Right cardiac atrium (tissue), 5 donors: ENCODE measurements at regions of chr2 and their contacts with region 1.

Region 1: GRCh38 chr2:197804049-197804757 is at the start of gene PLCL1:
- DNase-seq: peak; percentile 94 to 97 (median 97)
- ATAC-seq: peak; percentile 97 to 98
- H3K4me3 ChIP-seq: peak within 1 kb of the TSS; percentile 69
- H3K27ac ChIP-seq: peak within 1 kb of the TSS; percentile 70
- H3K4me1 ChIP-seq: no peaks in the 10 kb centered on the region
- H3K27me3 ChIP-seq: no peaks in the 10 kb centered on the region
- total RNA-seq, gene PLCL1: 37.8 to 70.1 (median 52.7) TPM

Region 2: DNA sequence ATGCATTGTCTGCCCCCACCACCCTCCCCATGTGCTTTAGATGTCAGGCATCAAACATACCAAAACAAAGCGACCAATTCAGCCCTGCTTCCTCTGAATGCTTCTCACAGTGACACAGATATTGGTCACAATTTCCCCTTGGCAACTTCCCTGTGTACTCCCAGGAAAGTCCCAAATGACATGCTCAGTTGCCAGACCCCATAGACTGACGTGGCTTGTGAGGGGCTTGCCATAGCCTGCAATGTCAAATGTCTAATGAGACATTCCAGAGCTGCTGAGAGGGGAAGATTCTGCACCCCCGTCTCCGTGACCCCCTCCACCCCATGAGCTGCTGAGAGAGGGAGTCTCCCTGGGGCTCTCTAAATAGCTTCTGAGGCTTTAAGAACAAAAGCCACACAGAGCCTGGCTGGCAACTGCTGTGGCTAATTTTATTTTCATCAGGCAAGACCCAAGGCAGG is 176.1 kb before region 1 on chr2:
- intact Hi-C with region 1: no loop called
- DNase-seq: peak; percentile 54 to 59 (median 57)
- ATAC-seq: peak; percentile 83 to 85
- H3K4me3 ChIP-seq: no peak overlapping the region
- H3K27ac ChIP-seq: peak overlapping the region; percentile 6
- H3K4me1 ChIP-seq: no peaks in the 10 kb centered on the region
- H3K27me3 ChIP-seq: no peaks in the 10 kb centered on the region

Region 3: GRCh38 chr2:197893403-197894177 is 89.4 kb after region 1 on chr2:
- intact Hi-C with region 1: loop called in 1 of 4 experiments (anchors 10 kb)
- DNase-seq: peak; percentile 28 to 61 (median 61)
- ATAC-seq: peak; percentile 88 to 91
- H3K4me3 ChIP-seq: no peak overlapping the region
- H3K27ac ChIP-seq: peak overlapping the region; percentile 93
- H3K4me1 ChIP-seq: peaks cover 9% of the 10 kb centered on the region
- H3K27me3 ChIP-seq: no peaks in the 10 kb centered on the region

Region 4: DNA sequence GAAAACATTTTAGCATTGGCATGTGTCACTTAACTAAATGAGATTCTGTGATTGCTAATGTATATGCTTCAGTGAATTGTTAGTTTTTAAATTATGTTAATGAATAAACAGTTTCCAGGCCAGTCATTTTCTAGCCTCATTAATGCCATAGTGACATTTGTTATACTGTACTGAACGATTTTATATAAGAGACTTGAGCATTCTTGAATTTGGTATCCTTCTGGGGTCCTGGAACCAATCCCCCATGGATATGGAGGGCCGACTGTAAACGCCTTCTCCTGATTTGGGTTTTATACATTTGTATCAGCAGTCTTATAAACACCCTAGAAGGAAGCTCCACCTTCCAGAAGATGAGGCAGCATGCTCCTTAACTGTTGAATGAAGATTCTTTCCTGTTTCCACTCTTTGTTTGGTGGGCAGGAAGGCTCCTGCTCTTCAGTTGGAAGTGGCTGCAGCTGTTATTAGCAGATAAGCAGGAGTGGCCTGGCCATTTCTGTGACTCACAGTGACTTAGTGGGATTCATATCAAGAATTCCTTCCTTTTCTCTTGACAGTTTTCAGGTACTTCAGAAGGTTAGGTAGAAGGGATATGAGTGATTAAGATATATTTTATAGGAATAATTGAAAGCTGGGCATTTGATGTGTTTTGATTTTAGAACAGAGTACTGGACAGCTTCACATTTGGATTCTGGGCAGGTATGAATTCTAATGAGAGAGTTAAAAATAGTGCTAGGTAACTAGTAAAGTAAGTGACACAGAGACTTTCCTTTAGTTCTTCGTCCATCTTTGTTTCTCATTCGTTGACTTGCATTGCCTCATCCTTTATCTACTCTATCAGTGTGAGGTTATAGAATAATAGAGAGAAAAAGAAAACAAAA is 125.0 kb after region 1 on chr2:
- intact Hi-C with region 1: no loop called
- DNase-seq: no peak
- ATAC-seq: peak; percentile 40 to 51
- H3K4me3 ChIP-seq: no peak overlapping the region
- H3K27ac ChIP-seq: no peak overlapping the region
- H3K4me1 ChIP-seq: peaks cover 1% of the 10 kb centered on the region
- H3K27me3 ChIP-seq: no peaks in the 10 kb centered on the region

Region 5: DNA sequence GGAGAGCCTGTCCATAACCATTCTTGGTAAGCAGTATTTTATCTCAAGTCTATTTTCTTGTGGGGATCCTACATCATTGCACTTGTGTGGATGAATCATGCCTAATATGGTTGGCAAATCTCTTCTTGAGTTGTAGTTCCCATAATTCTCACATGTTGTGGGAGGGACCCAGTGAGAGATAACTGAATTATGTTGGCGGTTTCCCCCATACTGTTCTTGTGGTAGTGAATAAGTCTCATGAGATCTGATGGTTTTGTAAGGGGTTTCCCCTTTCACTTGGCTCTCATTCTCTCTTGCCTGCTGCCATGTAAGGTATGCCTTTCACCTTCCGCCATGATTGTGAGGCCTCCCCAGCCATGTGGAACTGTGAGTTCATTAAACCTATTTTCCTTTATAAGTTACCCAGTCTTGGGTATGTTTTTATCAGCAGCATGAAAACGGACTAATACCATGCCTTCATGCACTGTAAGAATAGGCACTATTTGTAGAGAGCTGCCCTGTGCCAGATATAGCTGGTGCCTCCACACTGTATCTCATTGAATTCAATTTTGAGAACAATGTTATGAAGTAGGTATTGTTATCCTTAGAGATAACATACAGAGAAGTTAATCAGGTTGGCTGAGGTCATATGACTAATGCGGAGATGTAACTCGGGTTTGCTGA is 148.5 kb after region 1 on chr2:
- intact Hi-C with region 1: loop called in 1 of 4 experiments (anchors 10 kb)
- DNase-seq: no peak
- ATAC-seq: no peak
- H3K4me3 ChIP-seq: no peak overlapping the region
- H3K27ac ChIP-seq: no peak overlapping the region
- H3K4me1 ChIP-seq: peaks cover 7% of the 10 kb centered on the region
- H3K27me3 ChIP-seq: no peaks in the 10 kb centered on the region

Region 6: GRCh38 chr2:197969391-197969893 is 165.2 kb after region 1 on chr2:
- intact Hi-C with region 1: loop called in 2 of 4 experiments (anchors 10 kb)
- DNase-seq: no peak
- ATAC-seq: peak; percentile 75 to 90
- H3K4me3 ChIP-seq: no peak overlapping the region
- H3K27ac ChIP-seq: no peak overlapping the region
- H3K4me1 ChIP-seq: peaks cover 2% of the 10 kb centered on the region
- H3K27me3 ChIP-seq: no peaks in the 10 kb centered on the region

Region 7: GRCh38 chr2:198053776-198054698 is 249.8 kb after region 1 on chr2:
- intact Hi-C with region 1: loop called in 1 of 4 experiments (anchors 10 kb)
- DNase-seq: peak in 2 of 3 donors; percentile 14 to 59
- ATAC-seq: peak in 1 of 2 donors; percentile 35
- H3K4me3 ChIP-seq: no peak overlapping the region
- H3K27ac ChIP-seq: no peak overlapping the region
- H3K4me1 ChIP-seq: peaks cover 3% of the 10 kb centered on the region
- H3K27me3 ChIP-seq: no peaks in the 10 kb centered on the region

Region 8: GRCh38 chr2:198127627-198128026 is 323.4 kb after region 1 on chr2:
- intact Hi-C with region 1: loop called (anchors 2 to 5 kb)
- DNase-seq: peak; percentile 35 to 53 (median 35)
- ATAC-seq: peak; percentile 68 to 71
- H3K4me3 ChIP-seq: no peak overlapping the region
- H3K27ac ChIP-seq: no peak overlapping the region
- H3K4me1 ChIP-seq: no peaks in the 10 kb centered on the region
- H3K27me3 ChIP-seq: no peaks in the 10 kb centered on the region

Region 9: GRCh38 chr2:198296665-198297308 is 492.6 kb after region 1 on chr2:
- intact Hi-C with region 1: loop called (anchors 5 kb)
- DNase-seq: peak in 2 of 3 donors; percentile 29 to 52
- ATAC-seq: peak; percentile 73 to 79
- H3K4me3 ChIP-seq: no peak overlapping the region
- H3K27ac ChIP-seq: no peak overlapping the region
- H3K4me1 ChIP-seq: no peaks in the 10 kb centered on the region
- H3K27me3 ChIP-seq: no peaks in the 10 kb centered on the region